Right ventricle myocardium superior (tissue), 1 donor: ENCODE measurements at regions of chr2 and their contacts with region 1.

Region 1: GRCh38 chr2:64750817-64751285 is 97.1 kb upstream of the SERTAD2 start:
- DNase-seq: peak; percentile 99
- ATAC-seq: peak; percentile 89

Region 2: DNA sequence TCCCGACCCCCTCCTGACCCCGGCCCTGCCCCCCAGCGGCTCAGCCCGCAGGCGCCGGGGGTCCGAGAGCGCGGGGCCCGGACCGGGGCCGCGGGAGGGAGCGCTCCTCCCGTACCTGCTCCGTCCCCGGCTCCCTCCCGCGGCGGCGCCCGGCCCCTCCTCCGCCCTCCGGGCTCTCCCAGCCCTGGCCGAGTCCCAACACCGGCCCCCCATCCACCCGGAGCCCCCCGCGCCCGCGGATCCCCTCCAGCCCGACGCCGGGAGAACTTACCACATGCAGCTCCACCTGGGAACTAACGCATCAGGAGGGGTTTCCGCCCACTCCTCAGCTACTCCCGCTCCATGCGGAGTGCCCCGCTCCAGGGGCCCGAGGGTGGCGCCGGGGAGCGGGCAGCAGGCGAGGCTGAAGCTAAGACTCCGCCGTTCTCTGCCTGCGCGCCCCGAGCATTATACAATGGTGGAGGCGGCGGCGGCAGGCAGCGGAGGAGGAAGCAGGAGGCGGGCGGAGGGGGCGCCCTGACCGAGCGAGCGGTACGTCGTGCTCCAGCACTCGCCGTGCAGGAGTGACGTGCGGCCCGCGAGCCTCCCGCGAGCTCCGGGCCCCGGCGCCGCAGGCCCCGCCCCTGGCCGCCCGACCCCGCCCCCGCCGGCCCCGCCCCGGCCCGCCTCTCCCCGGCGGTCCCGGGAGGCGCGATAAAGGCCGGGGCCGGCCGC is 97.3 kb before region 1 on chr2 and contains the start of gene SERTAD2:
- intact Hi-C with region 1: loop called (anchors 5 kb)
- DNase-seq: peak; percentile 95
- ATAC-seq: peak; percentile 89
- total RNA-seq, gene SERTAD2: 12.8 TPM

Region 3: GRCh38 chr2:64698668-64699444 is 52.0 kb before region 1 on chr2:
- intact Hi-C with region 1: no loop called
- DNase-seq: no peak
- ATAC-seq: no peak

Region 4: GRCh38 chr2:64859312-64860212 is 108.7 kb after region 1 on chr2:
- intact Hi-C with region 1: loop called (anchors 5 kb)
- DNase-seq: peak; percentile 95
- ATAC-seq: peak; percentile 90